Activated naive CD4-positive, alpha-beta T cell treated with anti-CD3 and anti-CD28 coated beads for 36 hours (primary cell): ENCODE measurements at regions of chr14 and their contacts with region 1.

Region 1: DNA sequence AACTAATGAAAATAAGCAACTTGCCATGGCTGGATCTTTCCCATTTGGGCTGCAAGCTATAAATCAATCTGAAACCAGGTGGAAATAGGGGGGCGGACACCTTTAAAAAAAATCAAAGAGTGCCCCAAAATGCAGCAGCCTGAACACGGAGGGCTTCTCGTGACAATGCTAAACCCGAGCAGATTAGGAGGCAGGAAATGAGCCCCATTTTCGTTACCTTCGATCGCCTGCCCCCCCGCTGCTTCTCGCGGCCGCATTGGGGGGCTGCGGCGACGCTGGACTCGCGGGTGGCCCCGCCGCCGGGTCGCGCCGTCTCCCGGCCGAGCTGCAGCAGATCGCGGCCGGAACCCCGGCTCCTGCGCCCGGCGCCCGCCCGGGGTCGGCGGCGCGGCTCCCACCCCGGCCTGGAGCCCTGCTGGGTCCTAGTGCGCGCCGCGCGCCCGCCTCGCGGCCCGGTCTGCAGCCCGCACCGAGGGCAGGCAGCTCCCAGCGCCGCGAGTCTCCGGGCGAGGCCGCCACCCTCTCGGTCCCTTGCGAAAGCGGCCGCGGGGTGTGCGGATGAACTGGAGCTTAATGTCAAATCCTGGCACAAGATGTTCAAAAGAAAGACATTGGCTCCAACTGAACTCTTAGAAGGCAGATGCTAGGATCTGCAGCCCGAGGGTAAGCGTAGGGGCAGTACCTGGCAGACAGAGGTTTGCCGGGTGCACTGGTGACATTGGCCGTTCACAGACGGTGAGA is 201.9 kb upstream of the FOXN3 start:
- DNase-seq: peak; percentile 60
- H3K4me3 Mint-ChIP-seq: peak overlapping the region; percentile 86
- H3K27ac Mint-ChIP-seq: peak overlapping the region; percentile 98
- H3K4me1 Mint-ChIP-seq: peaks cover 64% of the 10 kb centered on the region
- H3K27me3 Mint-ChIP-seq: no peaks in the 10 kb centered on the region

Region 2: DNA sequence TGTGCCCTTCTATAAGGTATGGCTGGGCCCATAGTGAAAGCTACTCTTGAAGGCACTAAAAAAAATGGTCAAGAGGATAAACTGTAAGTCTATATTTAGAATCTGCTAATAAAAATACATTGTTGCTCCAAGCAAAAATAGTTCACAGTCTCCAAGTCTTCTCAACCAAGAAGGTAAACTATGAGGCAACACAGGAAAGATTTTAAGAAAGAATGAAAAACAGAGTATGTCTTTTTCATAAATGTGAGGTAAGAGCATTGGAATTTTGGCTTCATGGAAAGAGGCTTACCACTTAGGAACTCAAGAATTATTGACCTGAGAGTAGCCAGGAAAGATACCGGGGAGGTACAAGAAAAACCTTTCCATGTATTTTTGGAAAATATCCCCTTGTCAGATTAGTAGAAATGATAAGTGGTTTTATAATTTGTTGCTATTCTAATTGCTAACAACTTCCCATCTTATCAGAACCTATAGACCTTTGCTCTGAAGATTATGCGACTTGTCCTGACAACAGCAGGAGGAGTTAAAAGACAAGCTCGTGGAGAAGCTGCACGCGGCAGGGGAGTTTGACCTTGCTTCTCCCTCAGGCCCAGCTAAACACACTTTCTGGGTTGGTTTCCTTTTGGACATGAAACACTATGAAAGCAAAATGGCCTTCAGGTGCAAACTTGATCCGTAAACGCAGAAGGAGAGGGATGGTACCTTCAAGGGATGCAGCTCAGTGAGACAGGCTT is 440.0 kb before region 1 on chr14:
- CTCF ChIA-PET with region 1: no interaction called
- intact Hi-C with region 1: loop called (anchors 10 kb)
- DNase-seq: no peak
- H3K4me3 Mint-ChIP-seq: no peak overlapping the region
- H3K27ac Mint-ChIP-seq: no peak overlapping the region
- H3K4me1 Mint-ChIP-seq: peaks cover 9% of the 10 kb centered on the region
- H3K27me3 Mint-ChIP-seq: no peaks in the 10 kb centered on the region

Region 3: GRCh38 chr14:89276424-89276975 is 342.5 kb before region 1 on chr14:
- CTCF ChIA-PET with region 1: no interaction called
- intact Hi-C with region 1: no loop called
- DNase-seq: peak; percentile 78
- H3K4me3 Mint-ChIP-seq: no peak overlapping the region
- H3K27ac Mint-ChIP-seq: peak overlapping the region; percentile 76
- H3K4me1 Mint-ChIP-seq: peaks cover 64% of the 10 kb centered on the region
- H3K27me3 Mint-ChIP-seq: no peaks in the 10 kb centered on the region

Region 4: DNA sequence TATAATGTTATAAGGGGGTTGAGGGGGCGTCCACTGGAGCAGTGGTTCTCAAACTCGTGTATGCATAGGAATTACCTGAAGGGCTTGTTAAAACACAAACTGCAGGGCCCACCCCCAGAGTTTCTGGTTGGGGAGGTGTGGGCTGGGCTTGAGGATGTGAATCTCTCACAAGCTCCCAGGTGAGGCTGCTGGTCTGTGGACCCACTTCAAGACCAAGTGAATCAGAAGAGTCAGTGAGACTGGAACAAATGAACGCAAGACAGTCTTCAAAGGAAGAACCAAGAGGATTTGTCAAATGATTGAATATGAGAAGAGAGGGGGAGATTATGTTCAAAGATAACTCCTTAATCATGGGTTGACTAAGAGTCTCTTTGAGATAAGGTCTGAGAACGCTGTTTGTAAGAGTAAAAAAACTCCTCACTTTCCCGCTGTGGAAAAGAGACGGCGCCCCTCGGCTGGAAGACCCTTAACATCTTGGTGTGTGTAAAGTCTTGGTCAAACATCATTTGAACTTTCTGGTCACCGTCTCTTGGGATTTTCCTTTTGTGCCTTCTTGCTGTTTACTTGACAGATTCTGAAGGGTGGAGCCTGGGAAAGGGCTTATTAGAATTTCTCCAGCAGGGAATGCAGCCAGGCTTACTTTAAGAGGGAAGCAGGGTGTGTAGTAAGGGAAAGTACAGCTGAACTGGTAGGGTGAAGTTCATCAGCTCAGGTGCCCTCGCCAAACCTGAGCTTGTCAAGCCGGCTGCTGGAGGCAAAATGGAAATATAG is 196.6 kb before region 1 on chr14:
- CTCF ChIA-PET with region 1: no interaction called
- intact Hi-C with region 1: loop called (anchors 2 kb)
- DNase-seq: peak; percentile 65
- H3K4me3 Mint-ChIP-seq: peak overlapping the region; percentile 29
- H3K27ac Mint-ChIP-seq: peak overlapping the region; percentile 72
- H3K4me1 Mint-ChIP-seq: peaks cover 78% of the 10 kb centered on the region
- H3K27me3 Mint-ChIP-seq: no peaks in the 10 kb centered on the region

Region 5: GRCh38 chr14:89509891-89510290 is 109.1 kb before region 1 on chr14:
- CTCF ChIA-PET with region 1: no interaction called
- intact Hi-C with region 1: loop called (anchors 1 kb)
- DNase-seq: no peak
- H3K4me3 Mint-ChIP-seq: peak overlapping the region; percentile 79
- H3K27ac Mint-ChIP-seq: peak overlapping the region; percentile 93
- H3K4me1 Mint-ChIP-seq: peaks cover 70% of the 10 kb centered on the region
- H3K27me3 Mint-ChIP-seq: no peaks in the 10 kb centered on the region

Region 6: DNA sequence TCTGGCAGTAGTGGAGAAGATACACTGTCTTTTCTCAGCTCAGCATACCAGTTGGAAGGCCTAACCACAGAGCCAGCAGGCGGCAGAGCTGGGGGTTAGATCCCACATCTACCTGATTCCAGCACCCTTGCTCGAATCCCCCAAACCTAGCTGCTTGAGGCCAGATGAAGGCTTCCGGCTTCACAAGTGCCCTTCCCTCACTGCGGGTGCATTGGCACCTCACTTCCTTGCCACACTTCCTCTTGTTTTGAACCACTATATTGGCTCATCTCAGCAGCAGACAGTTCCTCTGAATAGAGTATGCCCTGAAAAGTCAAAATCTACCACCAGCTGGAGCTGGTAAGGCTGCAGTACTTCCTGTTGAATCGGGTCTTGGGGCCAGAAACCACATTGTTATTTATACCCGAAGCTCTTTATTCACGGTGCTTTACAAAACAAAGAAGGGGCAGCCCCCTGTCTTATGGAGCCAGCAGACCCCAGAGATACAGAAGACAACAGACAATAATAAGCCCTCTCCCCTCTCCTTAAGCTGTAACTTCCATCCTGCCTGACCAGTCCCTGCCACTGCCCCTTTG is 101.8 kb after region 1 on chr14:
- CTCF ChIA-PET with region 1: interaction called, 5 read pairs
- intact Hi-C with region 1: loop called (anchors 1 kb)
- DNase-seq: peak; percentile 76
- H3K4me3 Mint-ChIP-seq: peak overlapping the region; percentile 32
- H3K27ac Mint-ChIP-seq: peak overlapping the region; percentile 95
- H3K4me1 Mint-ChIP-seq: peaks cover 68% of the 10 kb centered on the region
- H3K27me3 Mint-ChIP-seq: no peaks in the 10 kb centered on the region

Region 7: DNA sequence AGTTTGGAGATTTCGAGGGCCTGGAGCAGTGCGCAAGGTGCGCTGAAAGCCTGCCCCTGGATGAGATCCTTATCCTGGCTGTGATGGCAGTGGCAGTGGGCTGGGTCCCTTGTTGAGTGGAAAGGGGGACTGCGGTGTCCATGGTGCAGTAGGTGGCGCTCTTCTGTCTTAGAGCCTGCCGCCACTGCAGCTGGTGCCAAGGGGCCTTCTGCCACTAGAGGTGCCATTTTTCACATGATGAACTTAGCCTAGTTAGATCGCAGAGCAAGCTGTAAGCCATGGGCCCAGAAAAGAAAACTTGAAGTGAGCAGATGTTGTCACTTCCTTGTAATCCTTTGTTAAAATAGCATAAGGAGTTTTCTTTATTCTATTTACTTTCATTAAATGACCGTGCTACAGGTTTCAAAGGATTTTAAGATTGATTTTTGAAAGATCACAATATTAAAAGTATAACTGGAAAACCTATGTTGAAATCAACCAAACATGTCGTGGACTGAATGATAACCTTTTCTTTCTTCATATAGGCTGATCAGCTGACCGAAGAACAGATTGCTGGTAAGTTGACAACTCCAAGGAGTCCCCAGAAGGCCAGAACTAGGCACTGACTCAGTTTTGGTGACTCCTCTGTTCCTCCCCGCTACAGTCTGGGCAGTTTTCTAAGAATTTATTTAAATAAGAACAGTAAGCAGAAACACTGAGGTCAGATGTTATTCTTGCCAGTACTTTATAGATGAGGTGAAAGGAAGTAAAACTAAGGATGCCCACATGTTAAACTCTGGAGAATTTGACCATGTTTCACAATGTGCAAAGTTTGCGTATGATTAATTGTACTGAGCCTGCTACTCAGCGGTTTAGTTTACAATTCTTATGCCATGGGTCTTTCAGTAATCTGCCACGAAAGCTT is 780.8 kb after region 1 on chr14:
- CTCF ChIA-PET with region 1: no interaction called
- intact Hi-C with region 1: loop called (anchors 5 kb)
- DNase-seq: peak; percentile 93
- H3K4me3 Mint-ChIP-seq: peak overlapping the region; percentile 96
- H3K27ac Mint-ChIP-seq: peak overlapping the region; percentile 97
- H3K4me1 Mint-ChIP-seq: peaks cover 52% of the 10 kb centered on the region
- H3K27me3 Mint-ChIP-seq: no peaks in the 10 kb centered on the region